ENCODE measurements at regions of chr7 and their contacts with region 1.

Region 1: DNA sequence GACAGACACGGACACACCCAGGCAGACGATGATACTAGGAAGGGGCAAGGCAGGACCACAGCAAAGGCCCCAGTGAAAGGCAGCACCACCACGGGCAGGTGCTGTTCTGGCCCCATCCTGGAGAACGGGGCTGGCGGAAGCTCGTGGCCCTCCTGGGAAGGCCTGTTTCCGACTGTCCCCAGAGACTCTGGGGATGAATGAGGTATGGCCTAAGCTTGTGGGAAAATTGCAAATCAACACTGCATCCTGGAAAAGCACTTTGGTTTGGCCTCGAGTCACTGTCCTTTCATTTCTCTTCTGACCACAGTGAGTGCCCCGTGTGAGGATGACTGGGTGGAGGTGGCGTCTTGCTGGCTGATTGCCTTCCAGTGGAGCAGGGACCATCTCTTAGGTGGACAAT is 81.6 kb upstream of the ANLN start:
- DNase-seq: no peak
- H3K4me3 ChIP-seq: no peak overlapping the region
- H3K4me3 Mint-ChIP-seq: no peak overlapping the region
- H3K27ac ChIP-seq: no peak overlapping the region
- H3K27ac Mint-ChIP-seq: peak overlapping the region in 2 of 8 donors; percentile 17 to 58
- H3K4me1 ChIP-seq: no peaks in the 10 kb centered on the region
- H3K4me1 Mint-ChIP-seq: peaks cover 0 to 4% (median 2%) of the 10 kb centered on the region in 3 donors
- H3K27me3 ChIP-seq: no peaks in the 10 kb centered on the region
- H3K27me3 Mint-ChIP-seq: peaks cover 0 to 1% of the 10 kb centered on the region in 2 donors

Region 2: GRCh38 chr7:36318116-36318515 is 10.1 kb after region 1 on chr7:
- CTCF ChIA-PET with region 1: interaction called, 11 read pairs
- POLR2A ChIA-PET with region 1: no interaction called
- DNase-seq: no peak
- H3K4me3 ChIP-seq: no peak overlapping the region
- H3K4me3 Mint-ChIP-seq: no peak overlapping the region
- H3K27ac ChIP-seq: no peak overlapping the region
- H3K27ac Mint-ChIP-seq: no peak overlapping the region
- H3K4me1 ChIP-seq: no peaks in the 10 kb centered on the region
- H3K4me1 Mint-ChIP-seq: no peaks in the 10 kb centered on the region
- H3K27me3 ChIP-seq: peaks cover 3% of the 10 kb centered on the region
- H3K27me3 Mint-ChIP-seq: peaks cover 5 to 24% of the 10 kb centered on the region in 2 donors